ENCODE measurements at regions of chr12 and their contacts with region 1.

Region 1: GRCh38 chr12:91119084-91119483 is 7.8 kb upstream of the LUM start:
- DNase-seq: no peak
- H3K4me3 ChIP-seq: no peak overlapping the region
- H3K27ac ChIP-seq: peak overlapping the region; percentile 47 to 83
- H3K4me1 ChIP-seq: no peaks in the 10 kb centered on the region
- H3K27me3 ChIP-seq: no peaks in the 10 kb centered on the region
- CTCF ChIP-seq: no peak
- POLR2A ChIP-seq: no peak

Region 2: GRCh38 chr12:90826036-90826435 is 293.0 kb before region 1 on chr12:
- intact Hi-C with region 1: no loop called
- DNase-seq: no peak
- H3K4me3 ChIP-seq: no peak overlapping the region
- H3K27ac ChIP-seq: no peak overlapping the region
- H3K4me1 ChIP-seq: no peaks in the 10 kb centered on the region
- H3K27me3 ChIP-seq: no peaks in the 10 kb centered on the region
- CTCF ChIP-seq: no peak
- POLR2A ChIP-seq: no peak

Region 3: DNA sequence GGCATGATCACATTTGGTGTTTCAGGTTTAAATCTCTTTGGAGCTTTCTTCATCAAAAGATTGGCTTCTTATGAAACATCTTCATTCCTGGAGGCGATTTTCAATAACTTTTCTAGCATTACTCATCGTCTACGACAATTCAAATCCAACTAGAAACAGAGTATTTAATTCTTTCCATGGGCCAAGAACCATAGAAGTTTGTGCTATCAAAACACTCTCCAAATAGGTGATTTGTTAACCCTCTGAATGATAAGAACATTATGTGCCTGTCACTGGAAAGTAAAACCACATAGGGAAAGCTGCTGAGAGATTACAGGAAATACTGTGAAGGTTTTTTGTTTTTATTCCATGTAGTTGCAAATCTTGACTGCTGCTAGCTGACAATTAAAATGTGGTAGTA is 70.4 kb after region 1 on chr12:
- intact Hi-C with region 1: loop called (anchors 5 kb)
- DNase-seq: no peak
- H3K4me3 ChIP-seq: no peak overlapping the region
- H3K27ac ChIP-seq: peak overlapping the region; percentile 72 to 87
- H3K4me1 ChIP-seq: peaks cover 0 to 9% of the 10 kb centered on the region in 2 donors
- H3K27me3 ChIP-seq: no peaks in the 10 kb centered on the region
- CTCF ChIP-seq: no peak
- POLR2A ChIP-seq: no peak